ENCODE measurements at regions of chr7 and their contacts with region 1.

Region 1: DNA sequence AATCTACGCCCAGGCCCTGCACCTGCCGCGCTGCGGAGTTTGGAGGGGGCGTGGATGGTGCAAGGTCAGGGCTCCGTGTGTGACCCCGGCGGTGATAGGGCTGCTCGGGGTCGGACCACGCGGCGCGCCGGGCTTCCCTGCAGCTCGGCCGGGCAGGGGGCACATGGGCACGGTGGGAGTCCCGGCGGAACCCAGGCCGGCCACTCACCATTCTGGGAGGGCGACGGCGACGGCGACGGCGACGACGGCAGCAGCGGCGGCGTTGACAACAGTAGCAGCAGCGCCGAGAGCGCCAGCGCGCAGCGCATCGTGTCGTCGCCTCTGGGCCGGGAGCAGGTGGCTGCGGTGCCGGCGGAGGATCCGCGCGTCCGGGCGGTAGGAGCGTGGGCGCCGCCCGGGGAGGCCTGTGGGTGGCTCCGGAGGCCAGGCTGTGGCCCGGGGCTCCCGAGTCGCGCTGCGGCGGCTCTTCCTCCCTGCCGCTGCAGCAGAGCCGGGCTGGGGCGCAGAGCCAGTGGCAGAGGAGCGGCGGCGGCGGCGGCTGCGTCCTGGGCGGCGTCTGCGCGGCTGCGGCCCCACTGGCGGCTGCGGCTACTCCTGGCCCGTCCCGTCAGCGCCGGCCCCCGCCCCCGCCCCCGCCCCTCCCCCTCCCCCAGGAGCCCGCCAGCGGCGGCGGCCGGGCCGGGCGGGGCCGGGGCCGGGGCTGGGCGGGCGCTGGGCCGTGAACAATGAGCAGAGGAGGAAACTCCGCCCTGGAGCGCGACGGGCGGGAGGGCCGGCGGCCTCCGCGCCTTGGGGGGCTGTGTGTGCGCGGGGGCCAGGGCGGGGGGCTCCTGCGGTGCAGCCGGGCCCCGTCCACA is at the start of gene PODXL:
- DNase-seq: peak; percentile 82
- total RNA-seq, gene PODXL: 76.2 TPM

Region 2: DNA sequence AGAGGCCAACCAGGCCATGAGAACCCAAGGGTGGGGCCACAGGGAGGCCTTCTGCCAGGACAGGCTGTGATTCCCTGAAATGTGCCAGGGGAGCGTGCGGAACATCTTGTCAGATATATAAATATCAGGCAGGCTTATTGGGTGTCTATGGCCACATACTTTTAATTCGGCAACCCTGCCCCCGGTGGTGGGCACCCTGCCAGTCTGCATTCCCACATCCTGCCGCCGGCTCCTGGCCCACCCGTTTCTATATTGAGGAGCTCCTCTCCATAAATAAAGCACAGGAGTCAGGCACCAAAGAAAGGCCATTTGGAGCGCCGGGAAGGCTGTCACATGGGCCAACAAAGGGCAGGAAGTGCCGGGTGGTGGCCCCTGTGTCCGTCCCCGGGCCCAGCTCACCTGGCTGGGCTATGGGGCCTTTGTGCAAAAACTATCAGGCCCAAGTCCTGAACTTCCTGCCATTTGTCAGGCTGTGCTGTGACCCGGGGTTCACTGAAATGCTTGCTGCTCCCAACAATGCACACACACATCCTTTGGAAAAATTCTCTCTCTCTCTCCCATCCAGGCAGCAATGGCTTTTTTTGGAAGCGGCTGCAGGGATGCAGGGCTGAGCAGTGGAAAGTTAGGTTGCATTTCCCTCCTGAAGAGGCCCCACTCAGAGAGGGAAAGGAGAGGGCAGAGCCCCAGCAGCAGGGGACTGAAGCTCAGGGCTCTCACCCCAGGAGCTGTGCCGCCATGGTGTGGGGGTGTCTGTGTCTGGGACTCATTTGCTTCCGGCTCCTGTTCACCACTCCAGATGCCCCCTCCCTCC is 25.2 kb after region 1 on chr7:
- intact Hi-C with region 1: loop called (anchors 1 kb)
- DNase-seq: peak; percentile 93

Measured in cardiac septum (tissue), 1 donor.